ENCODE measurements at regions of chr11 and their contacts with region 1.

Region 1: DNA sequence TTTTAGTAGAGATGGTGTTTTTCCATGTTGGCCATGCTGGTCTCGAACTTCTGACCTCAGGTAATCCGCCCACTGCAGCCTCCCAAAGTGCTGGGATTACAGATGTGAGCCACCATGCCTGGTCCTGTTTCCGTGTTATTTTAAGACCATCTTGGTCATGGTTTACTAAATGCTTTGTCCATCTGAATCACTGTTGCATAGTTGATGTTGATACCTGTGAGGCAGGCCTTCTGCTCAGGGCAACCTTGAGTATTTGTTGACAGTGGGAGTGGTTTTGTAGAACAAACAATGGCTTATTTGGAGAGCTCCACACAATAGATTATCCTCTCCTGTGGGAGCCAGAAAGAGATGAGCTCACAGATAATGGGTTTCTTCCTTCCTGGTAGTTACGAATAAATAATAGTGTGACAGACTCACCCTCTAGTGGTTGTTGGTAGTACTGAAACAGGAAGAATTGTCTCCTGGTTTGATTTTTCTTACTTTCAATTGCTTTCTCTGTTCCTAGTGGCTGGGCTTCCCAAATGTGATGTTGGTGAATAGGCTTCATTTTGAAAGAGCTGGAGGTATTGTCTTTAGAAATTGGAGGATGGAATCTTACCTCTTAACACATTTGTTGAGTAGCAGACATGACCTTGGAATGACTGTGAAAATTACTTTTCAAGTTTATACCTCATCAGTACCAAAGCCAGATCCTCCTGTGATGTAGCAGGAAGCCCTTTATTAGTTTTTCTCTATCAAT is 39.0 kb downstream of the CTNND1 start:
- DNase-seq: no peak
- ATAC-seq: peak; percentile 87
- H3K4me3 Mint-ChIP-seq: no peak overlapping the region
- H3K27ac Mint-ChIP-seq: peak overlapping the region; percentile 84
- H3K4me1 Mint-ChIP-seq: peaks cover 34% of the 10 kb centered on the region
- H3K27me3 Mint-ChIP-seq: no peaks in the 10 kb centered on the region
- CTCF ChIP-seq: peak; percentile 57

Region 2: DNA sequence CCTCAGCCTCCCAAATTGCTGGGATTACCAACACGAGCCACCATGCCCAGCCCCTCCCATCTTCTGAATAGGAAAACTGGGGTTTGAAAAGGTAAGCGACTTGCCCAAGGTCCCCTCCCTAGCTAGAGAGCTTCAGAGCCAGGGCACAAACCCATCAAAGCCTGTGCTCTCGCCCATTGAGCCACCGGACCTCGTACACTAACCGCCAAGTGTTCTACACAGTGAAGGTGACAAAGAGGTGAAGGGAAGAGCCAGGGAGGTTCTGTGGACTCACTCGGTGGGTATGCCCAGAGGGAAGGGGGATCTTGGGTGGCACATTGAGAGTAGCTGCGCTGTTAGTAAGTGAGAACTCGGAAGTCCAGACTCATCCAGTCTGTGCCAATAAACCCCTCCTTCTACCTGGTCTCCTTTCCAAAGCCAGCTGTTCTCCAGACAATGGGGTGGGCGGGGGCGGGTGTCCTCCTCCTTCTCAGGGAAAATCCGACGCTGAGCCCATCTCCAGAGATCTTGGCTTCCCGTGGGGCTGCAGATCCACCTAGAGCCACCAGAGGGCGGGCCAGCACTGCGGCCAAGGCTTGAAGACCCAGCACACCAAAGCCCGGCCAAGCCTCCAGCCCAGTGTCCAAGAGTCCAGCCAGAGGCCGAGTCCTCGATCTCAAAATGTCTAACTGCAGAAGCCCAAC is 343.5 kb before region 1 on chr11:
- CTCF ChIA-PET with region 1: interaction called, 15 read pairs
- POLR2A ChIA-PET with region 1: no interaction called
- intact Hi-C with region 1: no loop called
- DNase-seq: peak; percentile 76
- ATAC-seq: peak; percentile 76
- H3K4me3 Mint-ChIP-seq: peak overlapping the region; percentile 70
- H3K27ac Mint-ChIP-seq: no peak overlapping the region
- H3K4me1 Mint-ChIP-seq: peaks cover 28% of the 10 kb centered on the region
- H3K27me3 Mint-ChIP-seq: peaks cover 28% of the 10 kb centered on the region
- CTCF ChIP-seq: peak; percentile 93

Region 3: GRCh38 chr11:57493507-57494503 is 306.8 kb before region 1 on chr11:
- CTCF ChIA-PET with region 1: interaction called, 17 read pairs
- POLR2A ChIA-PET with region 1: no interaction called
- intact Hi-C with region 1: no loop called
- DNase-seq: peak; percentile 64
- ATAC-seq: peak; percentile 96
- H3K4me3 Mint-ChIP-seq: no peak overlapping the region
- H3K27ac Mint-ChIP-seq: peak overlapping the region; percentile 76
- H3K4me1 Mint-ChIP-seq: peaks cover 7% of the 10 kb centered on the region
- H3K27me3 Mint-ChIP-seq: no peaks in the 10 kb centered on the region
- CTCF ChIP-seq: peak; percentile 30

Region 4: GRCh38 chr11:57667736-57668435 is 132.7 kb before region 1 on chr11 and contains the start of gene ZDHHC5:
- CTCF ChIA-PET with region 1: interaction called, 4 read pairs
- POLR2A ChIA-PET with region 1: interaction called, 12 read pairs
- intact Hi-C with region 1: loop called (anchors 1 kb)
- DNase-seq: peak; percentile 97
- ATAC-seq: peak; percentile 80
- H3K4me3 Mint-ChIP-seq: peak within 1 kb of the TSS; percentile 89
- H3K27ac Mint-ChIP-seq: peak within 1 kb of the TSS; percentile 99
- H3K4me1 Mint-ChIP-seq: peaks cover 49% of the 10 kb centered on the region
- H3K27me3 Mint-ChIP-seq: no peaks in the 10 kb centered on the region
- CTCF ChIP-seq: no peak
- total RNA-seq, gene ZDHHC5: 50.9 and 60.7 TPM in 2 replicates

Region 5: GRCh38 chr11:57741132-57742086 is 59.2 kb before region 1 on chr11 and contains the start of gene SELENOH:
- CTCF ChIA-PET with region 1: interaction called, 21 read pairs
- POLR2A ChIA-PET with region 1: interaction called, 62 read pairs
- intact Hi-C with region 1: loop called (anchors 1 kb)
- DNase-seq: peak; percentile 84
- ATAC-seq: peak; percentile 90
- H3K4me3 Mint-ChIP-seq: peak within 1 kb of the TSS; percentile 96
- H3K27ac Mint-ChIP-seq: peak within 1 kb of the TSS; percentile 98
- H3K4me1 Mint-ChIP-seq: peaks cover 30% of the 10 kb centered on the region
- H3K27me3 Mint-ChIP-seq: no peaks in the 10 kb centered on the region
- CTCF ChIP-seq: no peak
- total RNA-seq, gene SELENOH: 210 and 224 TPM in 2 replicates

Region 6: GRCh38 chr11:57761301-57762234 is 39.0 kb before region 1 on chr11 and contains the start of gene CTNND1:
- CTCF ChIA-PET with region 1: interaction called, 69 read pairs
- POLR2A ChIA-PET with region 1: interaction called, 3 read pairs
- intact Hi-C with region 1: no loop called
- DNase-seq: no peak
- ATAC-seq: peak; percentile 82
- H3K4me3 Mint-ChIP-seq: peak within 1 kb of the TSS; percentile 93
- H3K27ac Mint-ChIP-seq: peak within 1 kb of the TSS; percentile 77
- H3K4me1 Mint-ChIP-seq: peaks cover 30% of the 10 kb centered on the region
- H3K27me3 Mint-ChIP-seq: no peaks in the 10 kb centered on the region
- CTCF ChIP-seq: no peak
- total RNA-seq, gene CTNND1: 34.2 and 42.3 TPM in 2 replicates

Region 7: DNA sequence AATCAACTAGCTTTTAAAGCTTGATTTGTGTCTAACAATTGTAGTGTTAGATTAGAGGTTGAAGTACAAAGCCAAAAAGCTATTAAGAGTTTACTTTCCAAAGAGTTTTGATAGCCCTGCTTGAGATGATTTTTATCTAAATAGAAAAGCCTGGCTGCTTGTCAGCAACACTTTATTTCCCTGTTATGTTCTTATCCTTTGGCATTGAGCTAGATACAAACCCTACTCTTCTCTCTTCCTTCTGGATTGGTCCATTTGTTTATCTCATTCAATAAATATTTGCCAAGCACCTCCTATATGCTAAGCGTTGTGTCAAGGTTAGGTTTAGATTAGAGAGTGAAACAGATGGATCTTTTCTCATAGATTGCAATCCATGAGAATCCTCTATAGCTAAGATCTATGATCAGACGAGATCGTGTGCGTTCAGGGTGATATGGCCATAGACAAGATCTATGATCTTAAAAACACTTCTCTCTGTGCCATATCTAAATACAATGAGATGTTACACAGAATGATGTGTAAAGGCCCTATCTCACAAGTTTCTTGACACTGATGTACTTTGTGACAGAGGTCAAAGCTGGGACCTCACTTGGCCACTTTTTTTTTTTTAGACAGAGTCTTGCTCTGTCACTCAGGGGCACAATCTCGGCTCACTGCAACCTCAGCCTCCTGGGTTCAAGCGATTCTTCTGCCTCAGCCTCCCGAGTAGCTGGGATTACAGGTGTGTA is 18.8 kb after region 1 on chr11:
- CTCF ChIA-PET with region 1: no interaction called
- POLR2A ChIA-PET with region 1: no interaction called
- intact Hi-C with region 1: no loop called
- DNase-seq: no peak
- ATAC-seq: no peak
- H3K4me3 Mint-ChIP-seq: no peak overlapping the region
- H3K27ac Mint-ChIP-seq: no peak overlapping the region
- H3K4me1 Mint-ChIP-seq: no peaks in the 10 kb centered on the region
- H3K27me3 Mint-ChIP-seq: no peaks in the 10 kb centered on the region
- CTCF ChIP-seq: no peak

Measured in activated B cell treated with CpG ODN at 0.5 μM for 24 hours (primary cell).